ENCODE measurements at regions of chr12 and their contacts with region 1.

Region 1: GRCh38 chr12:96061864-96062453 is 26.6 kb upstream of the LTA4H start:
- DNase-seq: no peak

Region 2: DNA sequence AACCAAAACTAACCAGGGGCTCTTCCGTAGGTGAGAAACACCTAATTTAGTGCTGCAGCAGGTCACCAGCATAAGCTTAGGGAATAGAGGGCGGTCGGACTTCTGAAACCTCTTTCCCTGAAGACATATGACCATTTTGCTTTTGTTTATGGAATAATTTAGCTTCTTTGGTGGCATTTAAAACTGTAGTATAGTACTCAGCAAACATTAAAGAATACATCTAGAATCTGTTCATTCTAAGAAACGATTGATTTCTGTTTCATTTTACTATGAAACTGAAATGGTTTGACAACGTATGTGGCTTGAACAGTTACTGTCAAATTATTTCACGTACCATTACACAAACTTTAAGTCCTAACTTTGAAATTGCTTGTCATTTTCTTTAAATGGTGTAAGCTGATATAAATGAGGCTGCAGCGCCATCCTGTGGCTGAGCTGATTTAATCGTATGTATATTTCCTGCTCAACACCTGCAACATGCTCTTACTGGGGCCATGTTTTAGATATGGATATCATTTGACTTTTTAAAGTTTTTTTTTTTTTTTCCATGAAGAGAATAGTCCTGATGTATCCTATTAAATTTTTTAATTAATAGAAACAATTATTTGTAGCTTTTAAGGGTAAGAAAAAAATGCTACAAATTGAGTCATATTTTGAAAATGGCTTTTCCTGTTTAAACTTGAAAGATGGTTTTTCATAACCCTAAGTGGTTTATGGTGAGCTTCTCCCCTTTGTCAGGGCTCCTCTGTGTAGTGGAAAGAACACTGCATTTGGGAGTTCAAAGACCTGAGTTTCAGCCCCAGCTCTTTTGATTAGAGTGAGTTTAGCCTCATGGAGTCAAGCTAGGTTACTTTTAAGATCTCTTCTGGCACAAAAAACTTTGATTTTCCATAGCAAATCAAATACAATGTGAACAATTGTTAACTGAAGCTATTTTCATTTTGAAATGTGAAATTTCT is 454.8 kb after region 1 on chr12:
- intact Hi-C with region 1: loop called (anchors 2 kb)
- DNase-seq: peak; percentile 85

Measured in cardiac septum (tissue), 1 donor.